Activated CD4-positive, alpha-beta memory T cell treated with anti-CD3 and anti-CD28 coated beads for 36 hours (primary cell): ENCODE measurements at regions of chr5 and their contacts with region 1.

Region 1: GRCh38 chr5:140244525-140245025 is 58.3 kb downstream of the PFDN1 start:
- DNase-seq: peak; percentile 88
- H3K4me3 Mint-ChIP-seq: no peak overlapping the region
- H3K27ac Mint-ChIP-seq: no peak overlapping the region
- H3K4me1 Mint-ChIP-seq: peaks cover 23% of the 10 kb centered on the region
- H3K27me3 Mint-ChIP-seq: no peaks in the 10 kb centered on the region

Region 2: GRCh38 chr5:140220032-140220697 is 24.4 kb before region 1 on chr5:
- CTCF ChIA-PET with region 1: interaction called, 12 read pairs
- POLR2A ChIA-PET with region 1: no interaction called
- intact Hi-C with region 1: no loop called
- DNase-seq: peak; percentile 40
- H3K4me3 Mint-ChIP-seq: no peak overlapping the region
- H3K27ac Mint-ChIP-seq: no peak overlapping the region
- H3K4me1 Mint-ChIP-seq: peaks cover 29% of the 10 kb centered on the region
- H3K27me3 Mint-ChIP-seq: no peaks in the 10 kb centered on the region

Region 3: DNA sequence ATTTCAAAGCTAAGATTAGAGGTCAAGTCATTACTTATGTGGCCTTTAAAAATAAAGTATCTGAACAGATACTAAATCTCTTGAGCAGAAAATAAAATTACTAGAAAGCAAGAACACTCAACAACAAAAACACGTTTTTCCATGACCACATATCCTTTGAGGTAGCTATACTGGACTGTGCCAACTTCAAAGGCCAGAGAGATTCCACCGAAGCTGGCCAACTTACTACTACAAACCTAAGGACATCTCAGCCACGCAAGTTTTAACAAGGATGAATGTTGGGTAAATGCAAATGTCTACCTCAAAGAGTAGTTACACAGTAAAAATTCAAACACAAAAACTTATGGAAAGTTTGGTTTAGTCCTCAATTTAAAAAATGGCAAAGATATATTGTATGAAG is 39.4 kb after region 1 on chr5:
- CTCF ChIA-PET with region 1: interaction called, 15 read pairs
- POLR2A ChIA-PET with region 1: no interaction called
- intact Hi-C with region 1: no loop called
- DNase-seq: no peak
- H3K4me3 Mint-ChIP-seq: no peak overlapping the region
- H3K27ac Mint-ChIP-seq: no peak overlapping the region
- H3K4me1 Mint-ChIP-seq: peaks cover 8% of the 10 kb centered on the region
- H3K27me3 Mint-ChIP-seq: no peaks in the 10 kb centered on the region

Region 4: GRCh38 chr5:140346348-140347101 is 102.0 kb after region 1 on chr5 and contains the start of gene HBEGF:
- CTCF ChIA-PET with region 1: interaction called, 744 read pairs
- POLR2A ChIA-PET with region 1: interaction called, 3 read pairs
- intact Hi-C with region 1: loop called (anchors 1 kb)
- DNase-seq: peak; percentile 69
- H3K4me3 Mint-ChIP-seq: peak within 1 kb of the TSS; percentile 70
- H3K27ac Mint-ChIP-seq: no peak within 1 kb of the TSS
- H3K4me1 Mint-ChIP-seq: peaks cover 37% of the 10 kb centered on the region
- H3K27me3 Mint-ChIP-seq: peaks cover 1% of the 10 kb centered on the region
- total RNA-seq, gene HBEGF: 21.5 to 23.5 TPM

Region 5: DNA sequence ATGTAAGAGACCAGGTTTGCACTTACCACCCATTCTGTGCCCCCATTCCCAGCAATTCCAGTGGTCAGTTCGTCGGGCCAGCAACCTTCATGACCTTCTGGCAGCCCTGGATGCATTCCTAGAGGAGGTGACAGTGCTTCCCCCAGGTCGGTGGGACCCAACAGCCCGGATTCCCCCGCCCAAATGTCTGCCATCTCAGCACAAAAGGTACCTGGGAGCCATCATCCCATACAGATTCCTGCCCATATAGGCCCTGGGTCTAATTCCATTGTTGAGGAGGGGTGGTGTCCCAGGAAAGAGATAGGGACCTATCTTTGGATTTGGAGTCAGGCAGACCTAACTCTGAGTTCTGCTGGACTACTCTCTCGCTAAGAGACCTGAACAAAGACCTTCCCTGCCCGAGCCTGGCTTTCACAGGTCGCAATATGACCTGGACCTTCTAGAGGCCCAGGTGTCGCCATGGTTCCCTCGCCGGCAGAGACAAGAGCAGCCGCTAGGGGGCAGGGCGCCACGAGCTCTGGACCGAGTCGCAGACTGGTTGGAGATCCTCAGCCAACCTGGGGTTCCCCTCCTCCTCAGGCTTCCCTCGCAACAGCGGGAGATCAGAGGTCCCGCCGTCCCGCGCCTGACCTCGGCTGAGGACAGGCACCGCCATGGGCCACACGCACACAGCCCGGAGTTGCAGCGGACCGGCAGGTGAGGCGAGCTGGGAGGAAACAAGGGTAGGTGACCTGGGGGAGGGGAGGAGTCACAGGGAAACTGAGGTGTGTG is 118.5 kb after region 1 on chr5:
- CTCF ChIA-PET with region 1: interaction called, 66 read pairs
- POLR2A ChIA-PET with region 1: no interaction called
- intact Hi-C with region 1: no loop called
- DNase-seq: peak; percentile 91
- H3K4me3 Mint-ChIP-seq: peak overlapping the region; percentile 72
- H3K27ac Mint-ChIP-seq: peak overlapping the region; percentile 52
- H3K4me1 Mint-ChIP-seq: peaks cover 4% of the 10 kb centered on the region
- H3K27me3 Mint-ChIP-seq: peaks cover 3% of the 10 kb centered on the region

Region 6: DNA sequence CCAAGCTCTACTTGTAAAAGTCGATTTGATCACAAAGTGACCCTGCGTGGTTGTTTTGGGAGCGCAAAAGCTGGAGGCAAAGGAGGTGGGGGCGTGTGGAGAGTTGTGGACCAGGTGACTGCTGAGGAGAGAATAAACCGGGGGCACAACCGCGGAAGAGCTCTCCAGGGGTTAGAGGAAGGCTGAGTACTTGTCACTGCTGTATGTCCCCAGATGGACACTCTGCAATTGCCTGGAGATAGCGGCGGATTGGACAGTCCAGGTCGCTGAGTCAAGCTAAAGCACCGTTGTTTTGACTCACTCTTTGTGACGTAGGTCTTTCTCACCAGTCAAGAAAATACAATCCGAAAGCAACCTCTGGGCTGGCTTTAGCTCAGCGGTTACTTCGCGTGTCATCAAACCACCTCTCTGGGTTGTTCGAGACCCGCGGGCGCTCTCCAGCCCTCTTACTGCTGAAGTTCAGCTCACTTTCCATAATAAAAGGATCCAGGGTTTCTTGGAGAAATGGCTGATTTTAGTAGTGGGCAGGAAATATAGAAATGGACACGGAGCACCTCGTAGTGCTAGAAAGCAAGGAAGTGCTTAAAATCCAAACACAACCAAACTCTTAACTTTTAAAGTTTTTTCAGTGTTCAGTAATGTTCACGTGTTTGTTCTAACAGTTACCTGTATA is 481.4 kb after region 1 on chr5:
- CTCF ChIA-PET with region 1: interaction called, 3 read pairs
- POLR2A ChIA-PET with region 1: no interaction called
- intact Hi-C with region 1: loop called (anchors 5 kb)
- DNase-seq: peak; percentile 90
- H3K4me3 Mint-ChIP-seq: peak overlapping the region; percentile 80
- H3K27ac Mint-ChIP-seq: peak overlapping the region; percentile 79
- H3K4me1 Mint-ChIP-seq: peaks cover 8% of the 10 kb centered on the region
- H3K27me3 Mint-ChIP-seq: peaks cover 18% of the 10 kb centered on the region